Heart left ventricle (tissue), 16 donors: ENCODE measurements at regions of chr3 and their contacts with region 1.

Region 1: DNA sequence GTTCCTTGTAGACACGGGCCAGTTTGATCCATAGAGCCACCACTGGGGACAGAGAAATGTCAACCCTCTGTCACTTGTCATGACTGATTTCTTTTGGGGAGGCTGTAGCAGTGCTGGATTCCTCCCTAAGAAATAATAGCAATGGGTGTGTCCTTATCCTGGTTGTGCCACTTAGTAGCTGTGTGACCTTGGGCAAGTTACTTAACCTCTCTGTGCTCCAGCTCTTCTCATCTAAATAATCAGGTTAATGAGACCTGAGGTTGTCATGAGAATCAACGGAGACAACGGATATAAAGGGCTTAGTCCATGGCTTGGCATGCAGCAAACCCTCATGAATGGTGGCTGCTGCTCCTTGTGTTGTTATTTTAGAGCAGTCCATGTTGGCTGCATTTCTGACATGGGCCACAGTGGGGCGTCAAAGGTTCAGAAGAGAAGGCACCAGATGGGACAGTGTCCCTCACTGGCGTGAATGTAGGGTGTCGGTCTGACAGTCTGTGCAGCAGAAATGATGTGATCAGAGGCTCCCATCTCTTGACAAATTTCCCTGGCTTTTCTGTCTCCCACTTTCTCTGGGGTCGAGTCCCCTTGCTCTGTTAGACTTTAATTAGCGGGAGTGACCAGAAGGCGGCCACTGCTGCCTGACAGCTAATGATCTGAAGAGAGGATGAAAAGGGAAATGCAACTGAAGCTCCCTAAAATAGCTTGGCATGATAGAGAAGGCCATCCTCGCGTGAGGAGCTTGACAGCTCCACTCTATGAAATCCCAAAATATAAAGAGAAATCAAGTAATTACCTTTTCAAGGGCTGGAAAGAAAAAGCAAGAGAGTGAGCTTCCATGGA is 209.4 kb downstream of the CADPS start:
- DNase-seq: peak; percentile 42 to 67 (median 53)
- ATAC-seq: peak; percentile 38 to 88 (median 85)
- H3K4me3 ChIP-seq: peak overlapping the region in 1 of 12 donors; percentile 21
- H3K27ac ChIP-seq: peak overlapping the region in 2 of 12 donors; percentile 17 to 24
- H3K4me1 ChIP-seq: peaks cover 0 to 10% (median 0%) of the 10 kb centered on the region in 12 donors
- H3K27me3 ChIP-seq: no peaks in the 10 kb centered on the region
- CTCF ChIP-seq: peak; percentile 46 to 71 (median 62)
- POLR2A ChIP-seq: no peak

Region 2: DNA sequence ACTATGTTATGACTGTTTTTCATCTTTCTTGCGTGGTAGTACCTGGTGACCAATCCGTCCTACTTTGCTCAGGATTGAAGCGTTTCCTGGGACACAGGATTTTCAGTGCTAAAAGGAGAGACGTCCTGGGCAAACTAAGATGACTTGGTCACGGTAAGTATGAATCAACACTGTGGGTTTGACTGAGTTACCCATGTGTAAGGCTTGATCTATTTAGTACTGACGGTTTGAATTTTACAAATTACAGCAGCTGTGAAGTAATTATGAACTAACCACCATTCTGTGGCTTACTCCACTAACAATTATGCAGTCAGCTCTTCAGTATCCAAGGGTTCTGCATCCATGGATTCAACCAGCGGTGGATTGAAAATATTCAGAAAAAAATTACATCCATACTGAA is 119.6 kb before region 1 on chr3:
- intact Hi-C with region 1: no loop called
- DNase-seq: no peak
- ATAC-seq: no peak
- H3K4me3 ChIP-seq: no peak overlapping the region
- H3K27ac ChIP-seq: no peak overlapping the region
- H3K4me1 ChIP-seq: no peaks in the 10 kb centered on the region
- H3K27me3 ChIP-seq: no peaks in the 10 kb centered on the region
- CTCF ChIP-seq: no peak
- POLR2A ChIP-seq: no peak

Region 3: DNA sequence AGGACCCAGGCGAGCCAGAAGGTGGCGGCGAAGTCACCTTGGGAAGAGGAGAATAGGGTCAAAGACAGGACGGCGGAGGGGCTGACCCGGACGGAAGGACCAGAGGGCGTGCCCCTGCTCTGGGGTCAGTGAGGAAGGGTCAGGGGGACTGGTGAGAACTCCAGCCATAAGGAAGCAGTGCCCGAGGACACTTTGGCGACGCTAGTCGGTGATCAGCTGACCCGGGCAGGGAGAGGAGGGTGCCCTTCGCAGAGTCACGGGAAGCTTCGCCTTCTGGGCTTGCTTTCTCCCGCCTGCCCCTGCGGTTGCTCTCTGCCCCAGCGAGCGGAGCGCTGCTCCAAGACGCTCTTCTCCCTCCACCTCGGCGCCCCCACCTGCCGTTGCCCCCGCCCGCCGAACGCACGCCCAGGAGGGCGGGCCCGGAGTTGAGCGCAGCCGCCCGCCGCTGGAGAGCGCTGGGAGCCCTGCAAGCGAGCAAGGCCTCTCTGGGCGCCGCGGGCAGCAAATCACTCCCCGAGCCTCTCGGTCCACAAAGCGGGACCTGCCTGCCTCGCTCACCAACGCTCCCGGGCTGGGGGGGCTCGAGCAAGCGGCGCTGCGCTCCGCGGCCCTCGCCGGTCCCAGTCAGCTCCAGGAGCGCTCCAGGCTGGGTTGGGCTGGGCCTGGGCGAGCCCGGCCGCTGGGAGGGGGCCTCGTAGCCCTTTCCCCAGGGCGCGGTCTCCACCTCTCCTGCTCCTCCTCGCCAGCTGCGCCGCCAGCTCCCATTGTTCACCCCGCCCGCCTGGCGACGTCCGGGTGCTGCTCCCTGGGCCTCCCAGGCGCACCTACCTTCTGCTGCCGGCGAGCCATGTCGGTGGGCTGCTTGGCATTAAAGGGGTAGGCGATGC is 208.2 kb after region 1 on chr3:
- intact Hi-C with region 1: loop called in 5 of 10 experiments (anchors 2 to 10 kb)
- DNase-seq: peak; percentile 55 to 77 (median 64)
- ATAC-seq: peak; percentile 74 to 92 (median 86)
- H3K4me3 ChIP-seq: peak overlapping the region; percentile 43 to 75 (median 62)
- H3K27ac ChIP-seq: peak overlapping the region; percentile 73 to 99 (median 90)
- H3K4me1 ChIP-seq: peaks cover 0 to 23% (median 0%) of the 10 kb centered on the region in 12 donors
- H3K27me3 ChIP-seq: peaks cover 0 to 46% (median 18%) of the 10 kb centered on the region in 9 donors
- CTCF ChIP-seq: peak in 2 of 12 donors; percentile 6 to 9
- POLR2A ChIP-seq: peak in 1 of 2 donors; percentile 13

Region 4: DNA sequence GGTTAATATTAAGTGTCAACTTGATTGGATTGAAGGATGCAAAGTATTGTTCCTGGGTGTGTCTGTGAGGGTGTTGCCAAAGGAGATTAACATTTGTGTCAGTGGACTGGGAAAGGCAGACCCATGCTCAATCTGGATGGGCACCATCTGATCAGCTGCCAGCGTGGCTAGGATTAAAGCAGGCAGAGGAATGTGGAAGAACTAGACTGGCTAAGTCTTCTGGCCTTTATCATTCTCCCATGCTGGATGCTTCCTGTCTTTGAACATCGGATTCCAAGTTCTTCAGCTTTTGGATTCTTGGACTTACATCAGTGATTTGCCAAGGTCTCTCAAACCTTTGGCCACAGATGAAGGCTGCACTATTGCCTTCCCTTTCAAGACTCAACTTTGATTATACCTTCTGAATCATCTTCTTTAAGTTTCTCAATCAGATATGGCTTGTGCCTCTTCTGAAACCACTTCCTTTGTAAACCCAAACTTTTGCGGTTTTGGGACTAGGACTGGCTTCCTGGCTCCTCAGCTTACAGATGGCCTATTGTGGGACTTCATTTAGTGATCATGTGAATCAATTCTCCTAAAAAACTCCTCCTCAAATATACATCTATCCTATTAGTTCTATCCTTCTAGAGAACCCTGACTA is 256.4 kb after region 1 on chr3:
- intact Hi-C with region 1: loop called in 5 of 10 experiments (anchors 5 to 10 kb)
- DNase-seq: no peak
- ATAC-seq: no peak
- H3K4me3 ChIP-seq: no peak overlapping the region
- H3K27ac ChIP-seq: no peak overlapping the region
- H3K4me1 ChIP-seq: no peaks in the 10 kb centered on the region
- H3K27me3 ChIP-seq: no peaks in the 10 kb centered on the region
- CTCF ChIP-seq: no peak
- POLR2A ChIP-seq: no peak

Region 5: DNA sequence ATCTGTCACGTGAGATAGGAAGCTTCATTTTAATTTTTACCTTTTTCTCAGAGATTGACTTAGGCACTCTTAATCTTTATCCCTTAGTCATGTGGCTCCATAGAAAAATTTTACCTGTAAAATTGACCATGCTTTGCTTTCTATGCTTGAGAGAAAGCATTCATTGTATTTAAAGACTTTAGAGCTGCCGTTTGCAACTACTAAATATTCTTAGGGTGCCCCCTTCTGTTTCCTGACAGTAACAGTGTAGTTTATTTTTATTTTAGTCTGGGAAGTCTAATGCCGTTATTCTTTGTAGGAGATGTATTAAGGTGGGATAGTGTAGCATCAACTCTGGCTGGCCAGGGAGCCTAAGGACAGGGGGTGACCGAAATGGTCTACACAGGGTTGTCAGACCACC is 527.8 kb after region 1 on chr3:
- intact Hi-C with region 1: loop called in 9 of 10 experiments (anchors 2 to 5 kb)
- DNase-seq: no peak
- ATAC-seq: peak in 2 of 4 donors; percentile 22 to 38
- H3K4me3 ChIP-seq: no peak overlapping the region
- H3K27ac ChIP-seq: no peak overlapping the region
- H3K4me1 ChIP-seq: no peaks in the 10 kb centered on the region
- H3K27me3 ChIP-seq: no peaks in the 10 kb centered on the region
- CTCF ChIP-seq: peak in 11 of 12 donors; percentile 23 to 65 (median 48)
- POLR2A ChIP-seq: no peak

Region 6: DNA sequence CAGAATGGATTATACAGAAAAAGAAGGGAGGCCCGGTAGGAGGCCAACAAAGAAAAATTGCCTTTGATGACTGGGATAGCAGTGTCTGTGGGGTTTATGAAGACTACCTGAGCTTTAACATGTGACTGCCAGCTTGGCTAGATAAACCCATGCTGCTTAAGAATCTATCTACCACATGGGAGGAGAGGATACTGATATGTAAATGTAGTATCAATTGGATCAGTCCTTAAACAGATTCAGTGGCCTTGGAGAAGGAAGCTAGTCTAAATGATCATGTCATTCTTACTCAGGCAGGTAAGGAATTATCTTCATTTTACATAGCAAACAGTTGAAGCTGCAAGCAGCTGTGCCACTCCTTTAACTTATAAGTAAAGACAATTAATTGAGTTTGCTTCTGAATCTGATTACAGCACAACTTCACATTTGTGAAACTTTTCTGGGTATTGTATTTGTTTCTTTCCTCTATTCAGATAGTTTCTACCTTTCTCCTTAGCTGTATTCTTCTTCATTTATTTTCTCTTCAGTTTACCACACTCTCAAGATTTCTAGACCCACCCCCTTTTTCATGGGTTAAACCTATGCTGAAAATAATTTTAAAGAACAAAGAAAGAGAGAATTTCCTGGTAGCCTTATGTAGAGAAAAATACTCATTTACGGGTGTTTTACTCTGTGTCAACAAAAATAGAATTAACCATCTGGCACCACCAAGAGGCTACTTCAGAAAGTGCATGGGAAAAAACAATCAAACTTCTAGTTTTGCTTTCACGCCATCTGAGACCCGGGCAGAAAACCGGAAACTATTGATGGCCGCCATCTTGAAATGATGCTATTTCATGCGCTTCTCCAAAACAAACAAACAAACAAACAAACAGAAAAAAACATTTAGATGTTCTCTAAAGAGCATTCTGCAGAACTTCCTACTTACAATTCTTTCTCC is 562.5 kb after region 1 on chr3:
- intact Hi-C with region 1: loop called in 6 of 10 experiments (anchors 5 to 10 kb)
- DNase-seq: no peak
- ATAC-seq: peak in 1 of 4 donors; percentile 50
- H3K4me3 ChIP-seq: no peak overlapping the region
- H3K27ac ChIP-seq: no peak overlapping the region
- H3K4me1 ChIP-seq: peaks cover 0 to 7% (median 0%) of the 10 kb centered on the region in 12 donors
- H3K27me3 ChIP-seq: no peaks in the 10 kb centered on the region
- CTCF ChIP-seq: peak; percentile 17 to 63 (median 48)
- POLR2A ChIP-seq: no peak